ENCODE measurements at regions of chr11 and their contacts with region 1.

Region 1: GRCh38 chr11:952406-953385 is 27.0 kb downstream of the AP2A2 start:
- DNase-seq: no peak
- ATAC-seq: peak; percentile 63
- H3K4me3 ChIP-seq: no peak overlapping the region
- H3K27ac ChIP-seq: no peak overlapping the region
- H3K4me1 ChIP-seq: peaks cover 0 to 5% of the 10 kb centered on the region in 2 experiments; a peak in 2 of 5 replicates
- H3K27me3 ChIP-seq: no peaks in the 10 kb centered on the region
- CTCF ChIP-seq: no peak
- EP300 ChIP-seq: no peak
- POLR2A ChIP-seq: no peak
- RAD21 ChIP-seq: no peak

Region 2: GRCh38 chr11:940496-941135 is 12.1 kb before region 1 on chr11:
- CTCF ChIA-PET with region 1: no interaction called
- POLR2A ChIA-PET with region 1: interaction called, 13 read pairs
- in situ Hi-C with region 1: no loop called
- intact Hi-C with region 1: no loop called
- DNase-seq: no peak
- ATAC-seq: no peak
- H3K4me3 ChIP-seq: no peak overlapping the region
- H3K27ac ChIP-seq: no peak overlapping the region
- H3K4me1 ChIP-seq: peaks cover 19 to 30% of the 10 kb centered on the region in 2 experiments
- H3K27me3 ChIP-seq: no peaks in the 10 kb centered on the region
- CTCF ChIP-seq: no peak
- EP300 ChIP-seq: no peak
- POLR2A ChIP-seq: no peak
- RAD21 ChIP-seq: no peak

Region 3: DNA sequence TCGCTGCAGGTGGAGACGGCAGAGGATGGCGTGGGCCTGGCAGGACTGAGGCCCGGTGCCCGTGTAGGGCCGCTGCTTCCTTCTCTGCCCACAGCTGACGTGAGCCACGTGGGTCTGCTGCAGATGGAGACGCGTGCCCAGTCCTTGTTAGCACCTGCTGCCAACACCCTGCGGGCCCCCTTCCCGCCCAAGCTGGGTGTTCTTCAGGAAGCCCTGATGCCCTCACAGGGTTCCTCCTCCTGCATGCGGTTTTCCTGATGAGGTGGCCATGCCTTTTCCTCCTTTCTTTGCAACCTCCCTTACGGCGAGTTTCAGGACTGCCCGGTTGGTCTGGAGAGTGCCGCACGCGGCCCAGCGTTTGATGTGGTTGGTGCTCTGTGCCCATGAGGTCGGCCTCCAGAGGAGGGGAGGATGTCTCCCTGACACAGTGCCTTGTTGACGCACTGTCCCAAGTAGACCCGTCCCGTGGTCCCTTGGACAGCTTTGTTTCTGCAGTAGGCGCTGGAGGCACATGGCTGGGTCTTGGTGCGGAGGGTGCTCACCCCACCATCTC is 17.7 kb after region 1 on chr11:
- CTCF ChIA-PET with region 1: no interaction called
- POLR2A ChIA-PET with region 1: no interaction called
- in situ Hi-C with region 1: no loop called
- intact Hi-C with region 1: no loop called
- DNase-seq: no peak
- ATAC-seq: no peak
- H3K4me3 ChIP-seq: no peak overlapping the region
- H3K27ac ChIP-seq: no peak overlapping the region
- H3K4me1 ChIP-seq: peaks cover 0 to 18% of the 10 kb centered on the region in 2 experiments; a peak in 1 of 5 replicates
- H3K27me3 ChIP-seq: no peaks in the 10 kb centered on the region
- CTCF ChIP-seq: no peak
- EP300 ChIP-seq: no peak
- POLR2A ChIP-seq: no peak
- RAD21 ChIP-seq: no peak